ENCODE measurements at regions of chr6 and their contacts with region 1.

Region 1: GRCh38 chr6:26054857-26055669 is 32.2 kb upstream of the HFE start:
- H3K4me3 ChIP-seq: peak overlapping the region; percentile 85
- H3K27ac ChIP-seq: peak overlapping the region; percentile 81
- H3K4me1 ChIP-seq: peaks cover 5% of the 10 kb centered on the region; the same call in 1 of the 2 replicates
- CTCF ChIP-seq: no peak

Region 2: GRCh38 chr6:26103770-26104456 is 48.9 kb after region 1 on chr6:
- CTCF ChIA-PET with region 1: interaction called, 724 read pairs
- POLR2A ChIA-PET with region 1: interaction called, 25 read pairs
- H3K4me3 ChIP-seq: peak overlapping the region; percentile 49
- H3K27ac ChIP-seq: peak overlapping the region; percentile 4; the same call in 1 of the 2 replicates
- H3K4me1 ChIP-seq: peaks cover 6% of the 10 kb centered on the region; the same call in 1 of the 2 replicates
- CTCF ChIP-seq: peak; percentile 60

Region 3: GRCh38 chr6:26204332-26205165 is 149.5 kb after region 1 on chr6:
- CTCF ChIA-PET with region 1: no interaction called
- POLR2A ChIA-PET with region 1: no interaction called
- H3K4me3 ChIP-seq: peak overlapping the region; percentile 73
- H3K27ac ChIP-seq: peak overlapping the region; percentile 71
- H3K4me1 ChIP-seq: no peaks in the 10 kb centered on the region
- CTCF ChIP-seq: peak; percentile 81

Measured in HEK293 (cell line).